GM12878 (cell line): ENCODE measurements at regions of chr16 and their contacts with region 1.

Region 1: GRCh38 chr16:73565262-73565661 is 517.3 kb upstream of the ZFHX3 start:
- DNase-seq: no peak
- ATAC-seq: peak; percentile 51
- H3K4me3 ChIP-seq: no peak overlapping the region
- H3K27ac ChIP-seq: no peak overlapping the region
- H3K4me1 ChIP-seq: no peaks in the 10 kb centered on the region
- H3K27me3 ChIP-seq: no peaks in the 10 kb centered on the region
- CTCF ChIP-seq: peak; percentile 14 to 38 (median 32); a peak in 3 of 6 replicates
- EP300 ChIP-seq: no peak
- POLR2A ChIP-seq: no peak
- RAD21 ChIP-seq: peak; percentile 54

Region 2: DNA sequence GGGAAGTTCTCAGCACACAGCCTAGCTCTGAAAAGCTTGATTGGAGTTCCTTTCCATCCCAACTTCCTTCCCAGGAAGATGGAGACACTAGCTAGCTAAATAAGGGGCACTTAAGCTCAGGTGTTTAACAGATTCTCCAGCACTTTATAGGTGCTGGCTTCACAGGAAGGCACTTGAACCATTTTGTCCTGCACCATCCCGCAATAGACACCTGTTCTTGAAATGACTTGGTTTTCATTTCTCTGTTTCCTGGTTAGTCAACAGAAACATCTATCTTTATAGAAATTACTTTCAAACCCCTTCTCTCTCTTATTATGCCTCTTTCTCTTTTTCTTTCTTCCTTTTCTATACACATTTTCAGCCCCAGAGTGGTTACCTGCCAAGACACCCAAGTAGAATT is 107.4 kb before region 1 on chr16:
- CTCF ChIA-PET with region 1: no interaction called
- POLR2A ChIA-PET with region 1: no interaction called
- RAD21 ChIA-PET with region 1: no interaction called
- SMC1A ChIA-PET with region 1: no interaction called
- in situ Hi-C with region 1: no loop called
- intact Hi-C with region 1: no loop called
- DNase-seq: no peak
- ATAC-seq: no peak
- H3K4me3 ChIP-seq: no peak overlapping the region
- H3K27ac ChIP-seq: no peak overlapping the region
- H3K4me1 ChIP-seq: no peaks in the 10 kb centered on the region
- H3K27me3 ChIP-seq: no peaks in the 10 kb centered on the region
- CTCF ChIP-seq: no peak
- EP300 ChIP-seq: no peak
- POLR2A ChIP-seq: no peak
- RAD21 ChIP-seq: no peak

Region 3: DNA sequence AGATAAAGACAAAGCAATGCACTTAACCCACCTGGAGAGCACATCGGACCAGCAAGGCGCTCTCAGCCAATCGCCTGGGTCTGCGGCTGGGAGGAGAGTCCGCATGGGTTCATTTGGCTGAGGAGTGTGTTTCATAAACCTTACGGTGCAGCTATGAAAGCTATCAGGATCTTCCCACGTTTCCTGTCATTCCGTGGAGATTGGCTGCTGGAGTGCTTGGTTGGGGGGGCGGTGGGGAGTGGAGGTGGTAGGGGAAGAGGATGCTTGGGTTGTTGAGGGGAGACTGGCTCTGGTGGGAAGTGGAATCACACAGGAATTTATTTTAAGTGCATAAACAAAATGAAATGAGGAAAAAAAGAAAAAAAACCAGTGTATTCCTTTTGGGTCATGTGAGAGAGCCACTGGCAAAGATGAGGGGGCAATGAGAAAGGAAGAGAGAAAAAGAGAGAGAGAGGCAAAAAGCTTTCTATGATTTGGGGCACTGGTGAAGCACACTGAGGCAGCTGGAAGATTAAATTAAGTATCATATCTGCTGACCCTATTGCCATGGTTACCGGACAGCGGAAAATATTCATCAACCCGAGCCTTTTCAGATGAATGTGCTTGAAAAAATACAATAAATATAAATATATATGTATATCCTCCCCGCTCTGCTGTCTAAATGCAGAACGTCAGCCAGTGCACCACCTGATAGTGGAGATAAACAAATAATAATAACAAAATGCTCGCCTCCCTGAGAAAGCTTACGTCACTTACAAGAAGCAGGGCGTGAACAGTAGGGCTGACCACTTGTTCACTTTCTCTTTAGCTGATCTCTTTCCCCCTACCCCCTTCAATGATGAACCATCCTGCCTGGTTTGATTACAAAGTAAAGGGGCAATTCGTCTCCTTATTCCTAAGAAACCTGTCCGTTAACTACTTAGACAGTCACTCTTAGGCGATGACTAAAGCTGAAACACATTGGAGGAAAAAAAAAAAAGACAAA is 60.4 kb before region 1 on chr16:
- CTCF ChIA-PET with region 1: no interaction called
- POLR2A ChIA-PET with region 1: no interaction called
- RAD21 ChIA-PET with region 1: no interaction called
- SMC1A ChIA-PET with region 1: no interaction called
- in situ Hi-C with region 1: no loop called
- intact Hi-C with region 1: no loop called
- DNase-seq: no peak
- ATAC-seq: no peak
- H3K4me3 ChIP-seq: no peak overlapping the region
- H3K27ac ChIP-seq: no peak overlapping the region
- H3K4me1 ChIP-seq: no peaks in the 10 kb centered on the region
- H3K27me3 ChIP-seq: no peaks in the 10 kb centered on the region
- CTCF ChIP-seq: no peak
- EP300 ChIP-seq: no peak
- POLR2A ChIP-seq: no peak
- RAD21 ChIP-seq: no peak

Region 4: GRCh38 chr16:73878611-73879010 is 313.3 kb after region 1 on chr16:
- CTCF ChIA-PET with region 1: interaction called, 15 read pairs
- POLR2A ChIA-PET with region 1: no interaction called
- RAD21 ChIA-PET with region 1: interaction called, 5 read pairs
- SMC1A ChIA-PET with region 1: interaction called, 10 read pairs
- in situ Hi-C with region 1: no loop called
- intact Hi-C with region 1: loop called (anchors 2 kb)
- DNase-seq: peak; percentile 3
- ATAC-seq: peak; percentile 56
- H3K4me3 ChIP-seq: no peak overlapping the region
- H3K27ac ChIP-seq: no peak overlapping the region
- H3K4me1 ChIP-seq: no peaks in the 10 kb centered on the region
- H3K27me3 ChIP-seq: no peaks in the 10 kb centered on the region
- CTCF ChIP-seq: peak; percentile 30 to 69 (median 36); a peak in 4 of 6 replicates
- EP300 ChIP-seq: no peak
- POLR2A ChIP-seq: no peak
- RAD21 ChIP-seq: peak; percentile 81

Region 5: DNA sequence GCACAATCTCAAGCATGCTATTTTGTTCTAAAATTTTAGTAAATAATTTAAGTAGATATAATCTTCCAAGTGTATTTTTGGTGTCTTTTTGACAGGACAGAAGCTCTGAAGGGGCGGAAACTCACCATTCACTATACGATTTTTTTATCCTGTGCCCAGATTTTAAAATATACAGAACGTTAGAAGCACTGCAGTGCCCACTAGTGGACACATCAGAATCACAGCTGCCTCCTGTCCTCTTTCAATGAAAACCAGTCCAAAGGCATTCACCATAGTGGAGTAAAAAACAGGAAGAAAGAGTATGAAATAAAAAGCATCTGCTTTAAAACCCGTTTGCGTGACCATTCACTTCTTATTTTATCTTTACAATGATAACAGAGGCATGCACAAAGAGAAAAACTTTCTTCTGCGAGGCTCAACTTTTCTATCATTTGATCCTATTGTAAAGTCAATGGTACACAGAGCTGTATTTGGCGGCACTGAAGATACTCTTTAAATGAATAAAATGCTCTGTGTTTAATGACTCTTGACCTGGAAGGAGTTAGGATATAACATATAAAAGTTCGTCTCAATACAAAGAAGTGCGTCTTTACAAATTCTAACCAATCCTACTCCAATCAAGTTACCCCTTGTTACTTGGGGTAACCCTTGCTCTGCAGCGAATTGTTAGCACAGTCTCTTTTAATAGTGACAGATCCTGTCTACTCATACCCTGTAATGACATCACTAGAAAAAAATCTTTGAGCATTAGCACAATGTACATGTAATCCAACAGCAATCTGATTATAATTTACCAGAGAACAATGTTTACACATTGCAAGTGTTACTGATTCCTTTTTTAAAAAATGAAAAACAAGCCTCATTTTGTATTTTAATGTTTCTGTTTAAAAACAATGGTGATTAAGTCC is 391.6 kb after region 1 on chr16:
- CTCF ChIA-PET with region 1: interaction called, 4 read pairs
- POLR2A ChIA-PET with region 1: no interaction called
- RAD21 ChIA-PET with region 1: interaction called, 3 read pairs
- SMC1A ChIA-PET with region 1: no interaction called
- in situ Hi-C with region 1: no loop called
- intact Hi-C with region 1: loop called (anchors 5 kb)
- DNase-seq: peak; percentile 2
- ATAC-seq: peak; percentile 82
- H3K4me3 ChIP-seq: no peak overlapping the region
- H3K27ac ChIP-seq: no peak overlapping the region
- H3K4me1 ChIP-seq: no peaks in the 10 kb centered on the region
- H3K27me3 ChIP-seq: no peaks in the 10 kb centered on the region
- CTCF ChIP-seq: peak; percentile 78 to 85 (median 78)
- EP300 ChIP-seq: no peak
- POLR2A ChIP-seq: no peak
- RAD21 ChIP-seq: peak; percentile 70

Region 6: DNA sequence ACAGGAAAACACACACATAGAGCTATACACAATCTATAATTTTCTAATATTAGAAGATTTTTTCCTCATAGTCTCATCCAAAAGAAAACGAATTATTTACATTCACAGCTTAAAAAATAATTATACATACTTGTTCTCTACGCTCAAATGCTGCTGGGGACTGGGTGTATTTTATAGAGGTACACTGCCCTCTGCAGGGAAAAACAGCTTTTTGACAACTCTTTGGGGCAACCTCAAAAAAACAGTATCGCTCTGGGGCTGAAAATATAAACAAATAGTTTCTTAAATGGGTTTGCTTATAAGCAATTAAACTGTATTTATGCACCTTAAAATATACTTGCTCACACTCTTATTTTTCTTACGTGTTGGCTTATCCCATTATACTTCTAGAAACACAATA is 469.6 kb after region 1 on chr16:
- CTCF ChIA-PET with region 1: no interaction called
- POLR2A ChIA-PET with region 1: no interaction called
- RAD21 ChIA-PET with region 1: no interaction called
- SMC1A ChIA-PET with region 1: no interaction called
- in situ Hi-C with region 1: no loop called
- intact Hi-C with region 1: loop called (anchors 5 kb)
- DNase-seq: no peak
- ATAC-seq: peak; percentile 79
- H3K4me3 ChIP-seq: no peak overlapping the region
- H3K27ac ChIP-seq: no peak overlapping the region
- H3K4me1 ChIP-seq: no peaks in the 10 kb centered on the region
- H3K27me3 ChIP-seq: no peaks in the 10 kb centered on the region
- CTCF ChIP-seq: peak; percentile 19 to 39 (median 33); a peak in 3 of 6 replicates
- EP300 ChIP-seq: no peak
- POLR2A ChIP-seq: no peak
- RAD21 ChIP-seq: peak; percentile 33